ENCODE measurements at regions of chr4 and their contacts with region 1.

Region 1: DNA sequence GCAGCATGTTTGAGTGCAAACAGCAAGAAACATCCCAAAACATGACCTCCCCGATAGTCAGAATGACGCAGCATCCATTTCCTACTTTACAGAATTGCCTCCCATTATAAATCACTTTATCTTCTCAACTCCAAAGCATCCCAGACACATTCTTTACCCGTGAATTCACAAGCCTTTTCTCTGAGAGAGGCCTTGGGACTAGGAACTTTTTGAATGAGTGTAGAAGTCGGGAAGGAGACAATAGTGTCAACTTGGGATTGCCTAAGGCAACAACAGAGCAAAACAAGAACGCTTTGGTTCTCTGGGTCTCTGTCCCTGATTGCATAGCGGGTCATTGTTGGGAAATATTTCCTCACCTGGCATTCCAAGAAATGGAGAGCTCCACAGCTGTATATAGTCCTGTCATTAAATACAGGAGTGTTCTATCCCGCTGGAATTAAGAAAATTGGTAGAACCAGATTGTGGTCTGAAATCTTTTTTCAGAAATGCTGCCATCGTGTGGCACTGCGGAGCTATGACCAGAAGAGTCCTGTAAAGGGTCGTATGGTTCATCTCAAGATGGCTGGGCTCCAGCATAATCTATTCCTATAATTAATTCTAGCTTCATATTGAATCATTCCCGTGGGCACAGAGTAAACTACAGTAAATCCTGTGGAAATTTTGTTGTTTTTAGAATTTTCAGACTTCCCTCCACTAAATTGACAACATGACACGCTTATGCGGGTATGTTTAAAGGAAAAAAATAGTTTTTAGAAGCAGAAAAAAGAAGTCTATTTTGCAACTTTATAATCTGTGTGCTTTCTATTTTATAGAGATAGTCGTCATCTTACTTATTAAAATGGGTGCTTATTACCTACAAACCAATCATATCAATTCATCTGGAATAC is 2.0 kb upstream of the SPP1 start:
- DNase-seq: peak in 3 of 9 donors; percentile 13 to 29 (median 17)
- ATAC-seq: peak; percentile 76
- H3K4me3 ChIP-seq: no peak overlapping the region
- H3K4me3 Mint-ChIP-seq: no peak overlapping the region
- H3K27ac ChIP-seq: no peak overlapping the region
- H3K27ac Mint-ChIP-seq: no peak overlapping the region
- H3K4me1 ChIP-seq: peaks cover 5 to 7% of the 10 kb centered on the region in 2 donors
- H3K4me1 Mint-ChIP-seq: peaks cover 0 to 14% (median 6%) of the 10 kb centered on the region in 7 donors
- H3K27me3 ChIP-seq: peaks cover 0 to 2% of the 10 kb centered on the region in 2 donors
- H3K27me3 Mint-ChIP-seq: peaks cover 44 to 63% (median 56%) of the 10 kb centered on the region in 5 donors

Region 2: GRCh38 chr4:87251106-87251505 is 722.4 kb before region 1 on chr4:
- CTCF ChIA-PET with region 1: no interaction called
- POLR2A ChIA-PET with region 1: no interaction called
- intact Hi-C with region 1: no loop called
- DNase-seq: no peak
- ATAC-seq: no peak
- H3K4me3 ChIP-seq: no peak overlapping the region
- H3K4me3 Mint-ChIP-seq: no peak overlapping the region
- H3K27ac ChIP-seq: no peak overlapping the region
- H3K27ac Mint-ChIP-seq: no peak overlapping the region
- H3K4me1 ChIP-seq: no peaks in the 10 kb centered on the region
- H3K4me1 Mint-ChIP-seq: no peaks in the 10 kb centered on the region
- H3K27me3 ChIP-seq: no peaks in the 10 kb centered on the region
- H3K27me3 Mint-ChIP-seq: peaks cover 0 to 6% (median 0%) of the 10 kb centered on the region in 5 donors

Region 3: DNA sequence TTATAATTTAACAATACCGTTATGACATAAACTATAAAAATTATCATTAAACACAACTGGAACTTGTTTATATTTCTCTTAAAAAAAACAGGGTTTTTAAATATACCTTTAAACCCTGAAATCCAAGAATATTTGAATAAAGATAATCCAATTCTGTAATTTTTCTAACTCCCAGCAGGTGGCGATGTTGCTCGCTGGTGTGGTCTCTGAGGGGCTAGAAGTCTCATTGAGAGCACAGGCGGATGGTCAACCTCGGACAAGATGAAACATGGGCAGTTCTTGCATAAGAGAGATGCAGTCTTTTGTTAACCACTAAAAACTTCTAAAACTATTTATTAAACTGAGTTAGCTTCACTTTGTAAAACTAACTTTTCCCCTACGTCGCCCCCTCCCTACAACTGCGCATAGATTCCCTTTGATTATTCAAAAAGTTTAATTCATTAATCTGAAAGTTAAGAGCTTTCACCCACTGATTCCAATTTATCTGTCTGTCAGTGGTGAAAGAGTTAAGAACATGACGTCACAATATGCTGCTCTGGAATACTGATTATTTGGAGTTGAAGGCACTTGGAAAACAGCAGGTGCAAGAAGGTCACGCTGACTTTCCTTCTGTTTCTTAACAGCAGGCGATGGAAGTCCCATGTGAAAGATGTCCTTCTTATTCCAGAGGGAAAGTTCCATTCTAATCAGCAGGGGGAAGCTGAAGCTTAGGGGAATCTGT is 293.9 kb before region 1 on chr4:
- CTCF ChIA-PET with region 1: no interaction called
- POLR2A ChIA-PET with region 1: no interaction called
- intact Hi-C with region 1: loop called in 1 of 2 experiments (anchors 2 kb)
- DNase-seq: peak in 5 of 9 donors; percentile 7 to 23 (median 22)
- ATAC-seq: no peak
- H3K4me3 ChIP-seq: no peak overlapping the region
- H3K4me3 Mint-ChIP-seq: no peak overlapping the region
- H3K27ac ChIP-seq: no peak overlapping the region
- H3K27ac Mint-ChIP-seq: no peak overlapping the region
- H3K4me1 ChIP-seq: no peaks in the 10 kb centered on the region
- H3K4me1 Mint-ChIP-seq: no peaks in the 10 kb centered on the region
- H3K27me3 ChIP-seq: no peaks in the 10 kb centered on the region
- H3K27me3 Mint-ChIP-seq: peaks cover 0 to 10% (median 3%) of the 10 kb centered on the region in 5 donors

Measured in naive thymus-derived CD4-positive, alpha-beta T cell (primary cell).